Calu3 (cell line): ENCODE measurements at regions of chr11 and their contacts with region 1.

Region 1: GRCh38 chr11:105862736-105863367 is 159.2 kb downstream of the MSANTD4 start:
- DNase-seq: peak; percentile 3
- H3K4me3 Mint-ChIP-seq: no peak overlapping the region
- H3K27ac Mint-ChIP-seq: no peak overlapping the region
- H3K4me1 Mint-ChIP-seq: no peaks in the 10 kb centered on the region
- H3K27me3 Mint-ChIP-seq: no peaks in the 10 kb centered on the region
- CTCF ChIP-seq: no peak

Region 2: GRCh38 chr11:103927535-103927934 is 1935.3 kb before region 1 on chr11:
- CTCF ChIA-PET with region 1: no interaction called
- intact Hi-C with region 1: loop called (anchors 10 kb)
- DNase-seq: no peak
- H3K4me3 Mint-ChIP-seq: no peak overlapping the region
- H3K27ac Mint-ChIP-seq: no peak overlapping the region
- H3K4me1 Mint-ChIP-seq: peaks cover 18% of the 10 kb centered on the region
- H3K27me3 Mint-ChIP-seq: no peaks in the 10 kb centered on the region
- CTCF ChIP-seq: no peak

Region 3: GRCh38 chr11:104164028-104164520 is 1698.8 kb before region 1 on chr11 and contains the start of gene PDGFD:
- CTCF ChIA-PET with region 1: no interaction called
- intact Hi-C with region 1: loop called (anchors 10 kb)
- DNase-seq: peak; percentile 79
- H3K4me3 Mint-ChIP-seq: peak within 1 kb of the TSS; percentile 81
- H3K27ac Mint-ChIP-seq: peak within 1 kb of the TSS; percentile 50
- H3K4me1 Mint-ChIP-seq: no peaks in the 10 kb centered on the region
- H3K27me3 Mint-ChIP-seq: no peaks in the 10 kb centered on the region
- CTCF ChIP-seq: peak; percentile 23
- total RNA-seq, gene PDGFD: 5.1 and 7.2 TPM in 2 replicates

Region 4: GRCh38 chr11:104254347-104254746 is 1608.5 kb before region 1 on chr11:
- CTCF ChIA-PET with region 1: no interaction called
- intact Hi-C with region 1: loop called (anchors 5 kb)
- DNase-seq: peak; percentile 40
- H3K4me3 Mint-ChIP-seq: no peak overlapping the region
- H3K27ac Mint-ChIP-seq: no peak overlapping the region
- H3K4me1 Mint-ChIP-seq: no peaks in the 10 kb centered on the region
- H3K27me3 Mint-ChIP-seq: no peaks in the 10 kb centered on the region
- CTCF ChIP-seq: peak; percentile 30

Region 5: GRCh38 chr11:104609311-104610085 is 1253.4 kb before region 1 on chr11:
- CTCF ChIA-PET with region 1: no interaction called
- intact Hi-C with region 1: loop called (anchors 5 kb)
- DNase-seq: peak; percentile 25
- H3K4me3 Mint-ChIP-seq: no peak overlapping the region
- H3K27ac Mint-ChIP-seq: no peak overlapping the region
- H3K4me1 Mint-ChIP-seq: no peaks in the 10 kb centered on the region
- H3K27me3 Mint-ChIP-seq: no peaks in the 10 kb centered on the region
- CTCF ChIP-seq: peak; percentile 44

Region 6: DNA sequence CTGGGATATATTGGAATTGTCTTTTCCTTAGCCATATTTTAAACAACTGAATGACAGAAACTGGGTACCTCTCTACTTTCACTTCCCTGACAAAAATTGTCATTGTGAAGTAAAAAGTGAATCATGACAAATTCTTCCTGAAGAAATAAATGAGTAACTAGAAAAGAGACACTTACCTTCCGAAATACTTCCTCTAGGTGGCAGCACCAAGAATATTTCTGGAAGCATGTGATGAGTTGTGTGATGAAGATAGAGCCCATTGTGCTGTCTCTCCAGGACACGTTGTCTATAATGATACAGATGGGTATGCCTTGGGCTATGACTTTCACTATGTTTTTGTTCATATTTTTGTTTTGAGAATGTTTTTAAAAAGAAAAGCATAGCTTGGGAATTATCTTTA is 915.9 kb before region 1 on chr11:
- CTCF ChIA-PET with region 1: no interaction called
- intact Hi-C with region 1: loop called (anchors 5 kb)
- DNase-seq: peak; percentile 13
- H3K4me3 Mint-ChIP-seq: no peak overlapping the region
- H3K27ac Mint-ChIP-seq: peak overlapping the region; percentile 13
- H3K4me1 Mint-ChIP-seq: peaks cover 8% of the 10 kb centered on the region
- H3K27me3 Mint-ChIP-seq: no peaks in the 10 kb centered on the region
- CTCF ChIP-seq: peak; percentile 31

Region 7: DNA sequence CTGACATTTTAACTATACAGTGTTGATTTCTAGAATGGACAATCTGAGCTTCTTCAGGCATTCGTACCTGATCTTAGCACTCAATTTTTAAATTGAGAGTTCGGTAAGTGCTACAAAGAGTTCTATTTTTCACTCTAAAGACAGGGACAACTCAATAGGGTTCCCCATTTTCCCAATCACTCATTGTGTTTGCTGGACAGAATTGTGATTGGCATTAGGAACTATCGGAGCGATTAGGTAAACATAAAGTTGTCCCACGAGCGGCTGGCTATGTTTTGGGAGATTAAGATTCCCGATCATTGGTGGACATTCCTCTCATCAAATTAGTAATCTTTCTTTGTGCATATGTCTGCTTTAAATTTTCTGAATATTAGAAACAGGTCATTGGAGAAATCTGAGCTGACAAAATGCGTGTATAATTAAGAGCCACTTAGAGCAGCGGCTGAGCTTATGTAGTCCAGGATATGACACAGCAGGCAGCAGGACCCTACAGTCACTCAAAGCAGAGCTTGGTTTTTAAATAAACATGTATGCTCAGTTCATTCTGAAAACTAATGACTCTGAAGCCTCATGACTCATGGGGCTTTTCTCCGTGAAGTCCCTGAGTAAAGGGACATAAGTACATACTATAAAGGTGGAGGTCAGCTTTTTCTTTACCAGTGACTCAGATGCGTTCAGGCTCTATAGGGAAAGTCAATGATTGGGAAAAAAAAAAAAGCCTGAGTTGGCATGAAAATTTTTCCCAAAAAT is 143.6 kb before region 1 on chr11:
- CTCF ChIA-PET with region 1: no interaction called
- intact Hi-C with region 1: no loop called
- DNase-seq: peak; percentile 3
- H3K4me3 Mint-ChIP-seq: peak overlapping the region; percentile 41
- H3K27ac Mint-ChIP-seq: peak overlapping the region; percentile 27
- H3K4me1 Mint-ChIP-seq: no peaks in the 10 kb centered on the region
- H3K27me3 Mint-ChIP-seq: no peaks in the 10 kb centered on the region
- CTCF ChIP-seq: no peak

Region 8: DNA sequence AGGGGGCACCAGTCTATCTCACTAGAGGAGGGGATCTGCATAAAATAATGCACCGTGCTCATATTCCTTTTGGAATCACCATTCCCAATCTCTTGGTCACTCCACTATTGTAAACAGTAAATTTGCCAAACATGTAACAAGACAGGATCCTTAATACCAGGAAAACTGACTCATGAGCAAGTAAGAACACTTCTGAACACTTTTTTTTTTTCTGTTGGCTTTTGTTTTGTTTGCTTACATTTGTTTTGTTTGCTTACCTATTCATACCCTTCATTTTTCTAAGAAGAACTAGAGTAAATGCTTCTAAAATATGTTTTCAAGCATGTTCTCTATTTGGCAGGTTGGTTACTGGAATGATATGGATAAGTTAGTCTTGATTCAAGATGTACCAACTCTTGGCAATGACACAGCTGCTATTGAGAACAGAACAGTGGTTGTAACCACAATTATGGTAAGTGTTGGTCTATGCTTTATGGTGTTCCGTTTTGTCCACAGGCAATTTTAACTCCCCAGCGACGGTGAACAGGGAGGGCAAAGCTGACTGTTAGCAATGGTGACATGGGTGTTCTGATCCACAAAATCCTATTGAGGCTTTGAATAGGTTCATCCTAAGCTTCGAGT is 47.4 kb after region 1 on chr11:
- CTCF ChIA-PET with region 1: no interaction called
- intact Hi-C with region 1: no loop called
- DNase-seq: no peak
- H3K4me3 Mint-ChIP-seq: no peak overlapping the region
- H3K27ac Mint-ChIP-seq: no peak overlapping the region
- H3K4me1 Mint-ChIP-seq: no peaks in the 10 kb centered on the region
- H3K27me3 Mint-ChIP-seq: no peaks in the 10 kb centered on the region
- CTCF ChIP-seq: no peak